Astrocyte of the cerebellum (primary cell): ENCODE measurements at regions of chr20 and their contacts with region 1.

Region 1: DNA sequence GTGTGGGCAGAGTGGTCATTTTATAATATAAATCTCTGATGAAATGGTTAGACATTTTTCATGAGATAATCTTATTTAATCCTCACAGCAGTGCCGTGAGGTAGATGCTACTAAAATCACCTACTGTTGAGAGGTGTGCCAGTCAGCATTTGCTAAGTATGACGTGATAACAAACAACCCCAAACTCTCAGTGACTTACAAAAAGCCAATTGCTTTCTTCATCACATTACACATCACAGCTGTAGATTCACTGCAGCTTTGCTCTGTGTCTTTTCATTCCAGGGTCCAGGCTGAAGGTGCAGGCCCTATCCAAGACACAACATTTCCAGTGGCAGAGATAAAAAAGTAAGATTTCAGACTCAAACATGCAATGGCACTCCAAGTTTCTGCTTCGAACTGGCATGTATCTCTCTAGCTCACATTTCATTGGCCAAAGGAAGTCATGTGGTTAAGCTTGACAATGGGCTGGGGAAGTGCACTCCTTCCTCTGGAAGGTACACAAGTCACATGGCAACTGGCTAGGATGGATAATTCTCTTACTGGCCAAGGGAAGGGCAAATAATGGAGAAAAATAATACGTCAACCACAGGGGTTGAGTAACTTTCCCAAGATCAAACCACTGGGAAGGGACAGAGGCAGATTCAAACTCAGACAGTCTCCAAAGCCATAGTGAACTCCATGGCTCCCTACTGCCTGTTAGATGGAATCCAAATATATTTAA is 69.5 kb upstream of the EPB41L1 start:
- DNase-seq: no peak
- H3K4me3 ChIP-seq: no peak overlapping the region
- CTCF ChIP-seq: no peak

Region 2: GRCh38 chr20:35680452-35681183 is 404.4 kb before region 1 on chr20:
- in situ Hi-C with region 1: no loop called
- DNase-seq: no peak
- H3K4me3 ChIP-seq: no peak overlapping the region
- CTCF ChIP-seq: no peak

Region 3: DNA sequence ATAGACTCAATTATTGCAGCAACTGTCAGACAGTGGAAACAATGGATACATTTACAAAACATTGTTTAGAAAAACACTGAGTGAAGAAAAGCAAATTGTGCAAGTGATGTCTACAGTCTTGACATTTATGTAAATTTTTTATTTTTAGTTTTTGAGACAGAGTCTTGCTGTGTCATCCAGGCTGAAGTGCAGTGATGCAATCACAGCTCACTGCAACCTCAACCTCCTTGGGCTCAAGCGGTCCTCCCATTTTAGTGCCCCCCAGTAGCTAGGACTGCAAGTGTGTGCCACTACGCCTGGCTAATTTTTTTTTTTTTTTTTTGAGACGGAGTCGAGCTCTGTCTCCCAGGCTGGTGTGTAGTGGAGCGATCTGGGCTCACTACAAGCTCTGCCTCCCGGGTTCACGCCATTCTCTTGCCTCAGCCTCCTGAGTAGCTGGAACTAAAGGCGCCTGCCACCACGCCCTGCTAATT is 107.0 kb before region 1 on chr20:
- in situ Hi-C with region 1: loop called (anchors 5 kb)
- DNase-seq: no peak
- H3K4me3 ChIP-seq: no peak overlapping the region
- CTCF ChIP-seq: no peak

Region 4: GRCh38 chr20:36128463-36129159 is 43.6 kb after region 1 on chr20:
- in situ Hi-C with region 1: no loop called
- DNase-seq: no peak
- H3K4me3 ChIP-seq: no peak overlapping the region
- CTCF ChIP-seq: no peak

Region 5: DNA sequence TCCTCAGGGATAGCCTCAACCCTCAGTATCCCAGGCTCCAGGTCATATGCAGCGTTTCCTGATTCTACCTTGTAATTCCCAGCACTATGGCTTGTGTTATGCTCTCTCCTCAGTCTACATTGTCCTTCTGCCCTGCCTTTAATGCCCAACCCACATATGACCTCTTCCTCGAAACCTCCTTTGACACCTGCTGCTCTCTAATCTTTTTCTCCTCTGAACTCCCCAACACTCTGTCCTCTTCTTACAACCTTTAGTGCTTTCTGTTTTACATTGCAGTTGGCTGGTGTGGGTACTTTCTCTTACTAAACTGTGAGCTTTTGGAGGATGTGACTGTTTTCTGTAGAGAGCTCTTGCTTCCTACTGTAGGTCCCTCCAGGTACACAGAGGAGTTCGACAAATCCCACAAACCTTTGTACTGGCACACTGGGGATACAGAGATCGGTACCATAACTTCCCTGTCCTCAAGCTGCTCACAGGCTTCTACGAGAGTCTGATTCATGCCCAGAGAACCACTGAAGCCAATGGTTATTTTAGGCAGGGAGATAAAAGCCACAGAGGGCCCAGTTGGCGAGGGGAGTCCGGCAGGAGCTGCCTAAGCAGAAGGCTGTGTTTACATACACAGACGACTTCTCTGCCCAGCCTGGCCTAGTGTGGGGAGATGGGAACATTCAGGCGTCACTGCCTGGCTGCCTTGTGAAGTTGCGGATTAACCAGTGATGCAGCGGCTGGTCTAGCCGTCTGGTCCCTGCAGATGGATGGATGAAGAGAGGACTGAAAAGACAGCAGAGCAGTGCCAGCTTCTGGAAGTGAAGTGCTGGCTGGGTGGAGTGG is 61.0 kb after region 1 on chr20:
- in situ Hi-C with region 1: no loop called
- DNase-seq: no peak
- H3K4me3 ChIP-seq: no peak overlapping the region
- CTCF ChIP-seq: no peak

Region 6: DNA sequence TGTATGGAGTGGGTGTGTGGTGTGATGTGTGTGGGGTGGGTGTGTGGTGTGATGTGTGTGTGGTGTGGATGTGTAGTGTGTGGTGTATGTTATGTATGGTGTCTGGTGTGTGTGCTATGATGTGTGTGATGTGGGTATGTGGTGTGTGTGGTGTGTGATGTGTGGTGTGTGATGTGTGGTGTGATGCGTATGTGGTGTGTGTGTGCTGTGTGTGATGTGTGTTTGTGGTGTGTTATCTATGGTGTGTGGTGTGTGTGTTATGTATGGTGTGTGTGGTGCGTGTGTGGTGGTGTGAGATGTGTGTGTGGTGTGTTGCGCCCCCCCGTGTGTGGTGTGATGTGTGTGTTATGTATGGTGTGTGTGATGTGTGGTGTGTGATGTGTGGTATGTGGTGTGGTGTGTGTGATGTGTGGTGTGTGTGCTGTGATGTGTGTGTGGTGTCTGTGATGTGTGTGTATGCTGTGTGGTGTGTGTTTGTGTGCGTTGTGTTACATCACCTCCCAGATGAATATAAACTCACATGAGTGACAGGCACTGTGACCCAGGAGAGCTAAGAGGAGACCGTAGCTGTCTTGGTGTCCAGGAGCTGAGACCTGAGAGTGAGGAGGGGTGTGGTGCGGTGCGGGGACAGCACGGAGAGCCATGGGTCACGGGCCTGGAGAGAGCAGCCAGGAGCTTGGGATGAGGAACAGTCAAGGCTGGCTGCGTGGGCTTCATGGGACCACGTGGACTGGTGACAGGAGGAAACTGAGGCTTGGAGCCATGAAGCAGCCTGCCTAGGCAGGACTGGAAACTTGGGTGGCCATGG is 229.9 kb after region 1 on chr20:
- in situ Hi-C with region 1: no loop called
- DNase-seq: no peak
- H3K4me3 ChIP-seq: no peak overlapping the region
- CTCF ChIP-seq: no peak